Mammary epithelial cell (primary cell): ENCODE measurements at regions of chr7 and their contacts with region 1.

Region 1: DNA sequence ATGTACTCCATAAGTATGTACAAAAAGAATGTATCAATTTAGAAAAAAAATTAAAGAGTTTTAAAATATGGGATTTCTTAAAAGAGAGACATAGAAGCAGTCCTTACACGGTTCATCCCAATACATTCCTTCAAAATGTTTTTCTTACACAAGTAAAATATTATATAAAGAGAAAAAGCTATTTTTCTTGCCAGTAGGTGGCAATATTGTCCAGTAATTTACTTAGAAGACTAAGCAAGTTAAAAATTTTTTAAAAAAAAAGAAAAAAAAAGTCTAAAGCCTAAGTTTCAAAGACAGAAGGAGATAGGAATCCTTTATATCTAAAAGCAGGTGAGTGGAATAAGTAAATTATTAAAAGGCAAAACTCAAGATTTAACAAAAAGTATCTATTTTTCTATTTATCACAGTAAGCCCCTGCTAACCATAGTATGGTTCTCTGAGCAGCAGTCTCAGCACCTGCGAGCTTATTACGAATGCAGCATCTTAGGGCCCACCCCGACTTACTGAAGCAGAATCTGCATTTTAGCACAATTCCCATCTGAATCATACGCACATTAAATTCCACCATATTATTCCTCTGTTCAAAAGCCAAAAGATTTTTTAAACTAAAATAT is 240.6 kb downstream of the DGKI start:
- DNase-seq: peak; percentile 25
- H3K4me3 ChIP-seq: no peak overlapping the region
- H3K27ac ChIP-seq: no peak overlapping the region
- H3K4me1 ChIP-seq: no peaks in the 10 kb centered on the region
- H3K27me3 ChIP-seq: peaks cover 10% of the 10 kb centered on the region
- CTCF ChIP-seq: peak; percentile 13 to 39

Region 2: DNA sequence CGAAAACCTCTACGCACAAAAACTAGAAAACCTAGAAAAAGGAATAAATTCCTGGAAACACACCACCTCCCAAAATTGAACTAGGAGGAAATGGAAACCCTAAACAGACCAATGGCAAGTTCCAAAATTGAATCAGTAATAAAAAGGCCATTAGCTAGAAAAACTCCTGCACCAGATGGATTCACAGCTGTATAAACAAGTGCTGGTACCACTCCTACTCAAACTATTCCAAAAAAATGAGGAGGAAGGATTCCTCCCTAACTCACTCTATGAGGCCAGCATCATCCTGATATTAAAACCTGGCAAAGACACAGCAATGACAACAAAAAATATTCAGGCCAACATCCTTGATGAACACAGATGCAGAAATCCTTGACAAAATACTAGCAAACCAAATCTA is 509.6 kb before region 1 on chr7:
- CTCF ChIA-PET with region 1: no interaction called
- dilution Hi-C with region 1: no loop called
- in situ Hi-C with region 1: no loop called
- intact Hi-C with region 1: no loop called
- DNase-seq: no peak
- H3K4me3 ChIP-seq: no peak overlapping the region
- H3K27ac ChIP-seq: no peak overlapping the region
- H3K4me1 ChIP-seq: no peaks in the 10 kb centered on the region
- H3K27me3 ChIP-seq: no peaks in the 10 kb centered on the region
- CTCF ChIP-seq: no peak

Region 3: GRCh38 chr7:137545059-137545716 is 61.0 kb before region 1 on chr7:
- CTCF ChIA-PET with region 1: no interaction called
- dilution Hi-C with region 1: no loop called
- in situ Hi-C with region 1: no loop called
- intact Hi-C with region 1: no loop called
- DNase-seq: no peak
- H3K4me3 ChIP-seq: no peak overlapping the region
- H3K27ac ChIP-seq: no peak overlapping the region
- H3K4me1 ChIP-seq: no peaks in the 10 kb centered on the region
- H3K27me3 ChIP-seq: no peaks in the 10 kb centered on the region
- CTCF ChIP-seq: no peak

Region 4: DNA sequence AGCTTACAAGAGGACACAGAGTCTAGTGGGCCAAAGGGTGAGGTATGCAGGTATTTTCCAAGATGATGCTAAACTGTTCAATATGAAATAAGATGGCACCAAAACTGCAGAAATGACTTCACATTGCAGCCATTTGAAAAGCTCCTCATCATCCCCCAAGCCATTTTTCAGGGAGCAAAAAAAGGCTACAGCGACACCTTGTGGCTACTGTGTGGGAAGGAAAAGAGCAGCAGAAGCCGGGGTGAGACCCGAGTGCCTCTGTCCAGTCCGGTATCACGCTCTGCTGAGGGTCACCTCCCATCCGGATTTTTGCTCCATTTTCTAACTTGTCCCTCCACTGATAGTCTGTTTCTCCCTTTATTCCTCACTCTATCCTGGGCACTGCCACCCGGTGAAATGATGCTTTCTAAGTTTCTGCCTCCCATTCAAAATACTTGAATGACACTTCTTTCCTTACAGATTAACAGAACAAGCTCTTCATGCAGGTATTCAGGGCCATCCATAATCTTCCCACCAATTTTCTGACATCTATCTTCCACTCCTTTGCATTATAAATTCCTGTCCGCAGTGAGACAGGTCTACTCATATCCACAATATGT is 20.4 kb after region 1 on chr7:
- CTCF ChIA-PET with region 1: interaction called, 3 read pairs
- dilution Hi-C with region 1: no loop called
- in situ Hi-C with region 1: no loop called
- intact Hi-C with region 1: loop called (anchors 1 kb)
- DNase-seq: peak; percentile 41
- H3K4me3 ChIP-seq: no peak overlapping the region
- H3K27ac ChIP-seq: no peak overlapping the region
- H3K4me1 ChIP-seq: no peaks in the 10 kb centered on the region
- H3K27me3 ChIP-seq: no peaks in the 10 kb centered on the region
- CTCF ChIP-seq: peak; percentile 85 to 91

Region 5: GRCh38 chr7:137703291-137704010 is 97.3 kb after region 1 on chr7:
- CTCF ChIA-PET with region 1: no interaction called
- dilution Hi-C with region 1: no loop called
- in situ Hi-C with region 1: no loop called
- intact Hi-C with region 1: no loop called
- DNase-seq: no peak
- H3K4me3 ChIP-seq: no peak overlapping the region
- H3K27ac ChIP-seq: no peak overlapping the region
- H3K4me1 ChIP-seq: no peaks in the 10 kb centered on the region
- H3K27me3 ChIP-seq: no peaks in the 10 kb centered on the region
- CTCF ChIP-seq: no peak